Heart left ventricle (tissue), 16 donors: ENCODE measurements at regions of chrX and their contacts with region 1.

Region 1: GRCh38 chrX:129649268-129650182 is 5.2 kb downstream of the APLN start:
- DNase-seq: no peak
- ATAC-seq: no peak
- H3K4me3 ChIP-seq: no peak overlapping the region
- H3K27ac ChIP-seq: no peak overlapping the region
- H3K4me1 ChIP-seq: peaks cover 0 to 21% (median 10%) of the 10 kb centered on the region in 12 donors
- H3K27me3 ChIP-seq: peaks cover 0 to 11% (median 0%) of the 10 kb centered on the region in 9 donors
- CTCF ChIP-seq: no peak
- POLR2A ChIP-seq: no peak

Region 2: GRCh38 chrX:129717892-129718291 is 68.4 kb after region 1 on chrX:
- intact Hi-C with region 1: loop called in 4 of 10 experiments (anchors 5 kb)
- DNase-seq: peak in 1 of 5 donors; percentile 45
- ATAC-seq: peak in 3 of 4 donors; percentile 33 to 54 (median 41)
- H3K4me3 ChIP-seq: no peak overlapping the region
- H3K27ac ChIP-seq: no peak overlapping the region
- H3K4me1 ChIP-seq: peaks cover 0 to 3% (median 0%) of the 10 kb centered on the region in 12 donors
- H3K27me3 ChIP-seq: peaks cover 0 to 9% (median 0%) of the 10 kb centered on the region in 9 donors
- CTCF ChIP-seq: no peak
- POLR2A ChIP-seq: no peak